Dorsolateral prefrontal cortex (tissue), 120 donors: ENCODE measurements at regions of chr19 and their contacts with region 1.

Region 1: DNA sequence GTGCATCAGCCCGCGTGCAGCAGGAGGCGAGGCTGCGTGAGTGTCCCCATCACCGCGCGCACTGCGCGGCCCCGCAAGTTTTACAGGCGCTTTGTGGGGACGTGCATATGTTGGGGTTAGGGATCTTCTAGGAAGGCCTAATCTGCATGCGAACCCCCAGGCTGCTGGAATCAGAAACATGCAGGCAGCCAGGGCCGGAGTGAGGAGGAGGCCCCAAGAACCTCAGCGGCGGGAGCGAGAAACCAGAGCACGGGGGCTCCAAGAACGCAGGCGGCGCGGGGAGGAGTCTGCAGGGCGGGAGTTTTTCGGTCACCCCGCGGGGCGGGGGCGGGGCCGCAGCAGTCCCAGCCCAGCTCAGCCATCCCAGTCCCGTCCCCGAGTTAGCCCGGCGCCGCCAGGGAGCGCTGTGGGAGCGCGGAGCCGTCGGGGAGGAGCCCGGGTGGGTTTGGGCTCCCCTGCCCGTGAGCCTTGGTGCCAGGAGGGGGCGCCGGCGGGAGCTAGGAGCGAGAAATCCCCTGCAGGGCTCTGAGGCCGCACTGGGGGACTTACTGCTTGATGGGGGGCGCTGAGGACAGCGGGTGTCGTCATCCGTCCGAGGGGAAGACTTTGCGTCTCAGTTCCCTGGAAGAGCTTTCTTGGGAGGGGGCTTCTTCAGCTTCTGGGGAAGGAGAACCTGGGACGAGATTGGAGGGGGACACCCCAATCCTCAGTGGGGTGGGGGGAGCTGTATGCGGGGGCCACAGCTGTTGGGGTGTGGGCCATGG is 933 bp upstream of the NRTN start:
- DNase-seq: peak in 2 of 10 donors; percentile 36 to 69
- H3K4me3 ChIP-seq: peak overlapping the region in 37 of 59 donors; percentile 2 to 56 (median 25)
- H3K27ac ChIP-seq: no peak overlapping the region
- H3K27me3 ChIP-seq: peaks cover 0 to 72% (median 53%) of the 10 kb centered on the region in 45 donors
- CTCF ChIP-seq: peak; percentile 18 to 77 (median 58)

Region 2: GRCh38 chr19:5727453-5728050 is 76.4 kb before region 1 on chr19:
- intact Hi-C with region 1: no loop called
- DNase-seq: no peak
- H3K4me3 ChIP-seq: no peak overlapping the region
- H3K27ac ChIP-seq: no peak overlapping the region
- H3K27me3 ChIP-seq: peaks cover 0 to 4% (median 0%) of the 10 kb centered on the region in 45 donors
- CTCF ChIP-seq: no peak

Region 3: DNA sequence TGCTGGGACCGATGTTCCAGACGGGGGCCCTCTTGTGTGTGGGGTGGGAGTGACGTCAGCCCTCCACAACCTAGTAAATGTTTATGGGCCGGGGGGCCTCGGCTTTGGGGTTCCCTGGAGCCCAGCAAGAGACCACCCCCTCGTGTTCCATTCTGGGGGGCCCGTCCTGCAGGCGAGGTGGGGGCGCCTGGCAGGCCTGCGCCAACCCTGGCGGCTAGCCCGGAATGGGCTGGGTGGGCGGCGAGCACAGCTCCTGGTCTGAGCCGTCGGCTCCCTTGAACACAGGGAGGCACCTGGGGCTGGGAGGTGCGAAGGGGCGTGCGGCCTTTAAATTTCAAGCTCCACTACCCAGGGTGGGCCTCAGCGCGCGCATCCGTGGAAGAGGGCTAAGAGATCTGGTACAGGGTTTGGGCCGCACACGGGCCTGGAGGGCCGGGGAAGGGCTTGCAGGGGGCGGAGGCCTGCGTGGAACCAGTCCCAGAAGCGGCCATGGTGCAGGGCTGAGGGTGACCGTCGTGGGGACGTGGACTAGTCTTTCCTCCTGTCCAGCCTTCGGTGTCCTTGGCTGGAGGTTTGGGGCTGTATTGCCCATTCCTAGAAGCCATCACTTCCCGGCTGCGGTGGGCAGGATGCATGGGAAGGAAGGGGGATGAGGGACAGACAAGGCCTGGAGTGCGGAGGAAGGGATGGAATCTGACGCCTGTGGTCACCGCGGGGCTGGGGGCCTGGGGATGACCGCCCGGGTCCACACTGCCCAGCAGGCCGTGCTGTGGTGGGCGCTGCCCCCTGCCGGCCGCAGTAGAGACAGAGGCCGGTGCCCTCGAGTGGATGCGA is 88.2 kb after region 1 on chr19:
- intact Hi-C with region 1: loop called in 1 of 2 experiments (anchors 2 kb)
- DNase-seq: peak in 3 of 10 donors; percentile 33 to 48 (median 48)
- H3K4me3 ChIP-seq: no peak overlapping the region
- H3K27ac ChIP-seq: no peak overlapping the region
- H3K27me3 ChIP-seq: peaks cover 0 to 19% (median 4%) of the 10 kb centered on the region in 45 donors
- CTCF ChIP-seq: peak in 53 of 56 donors; percentile 26 to 79 (median 60)